Kidney (tissue), 22 donors: ENCODE measurements at regions of chr17 and their contacts with region 1.

Region 1: DNA sequence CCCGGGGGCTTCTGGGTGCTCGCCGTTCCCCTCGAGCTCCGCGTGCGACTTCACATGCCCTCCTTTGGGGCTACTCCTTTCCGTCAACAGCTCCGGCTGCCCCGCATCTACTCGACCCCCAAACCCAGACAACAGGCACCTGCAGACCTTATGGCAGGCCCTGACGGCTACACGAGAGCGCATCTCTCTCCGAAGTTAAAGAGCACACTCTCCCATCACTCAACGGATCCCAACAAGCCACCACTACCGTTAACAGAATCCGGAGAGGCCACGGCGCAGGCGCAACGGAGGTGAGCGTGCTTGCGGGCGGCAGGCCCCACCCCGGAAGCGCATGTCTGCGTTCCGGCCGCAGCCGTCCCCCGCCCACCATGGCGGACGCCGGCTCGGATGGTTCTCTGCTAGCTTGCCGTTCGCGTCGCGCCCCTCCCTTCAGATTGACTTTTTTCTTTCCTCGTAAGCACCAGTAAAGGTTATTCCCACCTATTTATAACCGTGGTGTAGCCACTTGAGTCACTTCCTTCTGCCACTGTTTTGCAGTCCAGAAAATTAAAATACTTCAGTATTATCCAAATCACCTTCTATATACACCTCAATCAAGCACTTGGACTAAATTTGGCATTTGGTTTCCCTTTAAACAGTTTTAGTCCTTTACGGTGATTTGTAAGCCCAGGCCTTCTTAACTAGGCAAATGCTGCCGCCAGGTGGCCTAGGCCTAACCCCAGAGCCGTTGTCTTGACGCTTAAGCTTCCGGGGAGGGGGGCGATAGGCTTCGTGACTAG is at the start of gene POLG2:
- DNase-seq: peak; percentile 93 to 97 (median 96)
- H3K4me3 ChIP-seq: peak within 1 kb of the TSS; percentile 85 to 97 (median 91)
- H3K27ac ChIP-seq: peak within 1 kb of the TSS; percentile 76 to 88
- H3K4me1 ChIP-seq: peaks cover 0 to 15% (median 7%) of the 10 kb centered on the region in 3 donors
- H3K27me3 ChIP-seq: no peaks in the 10 kb centered on the region
- CTCF ChIP-seq: peak; percentile 24
- total RNA-seq, gene POLG2: 18.4 TPM

Region 2: GRCh38 chr17:64420143-64420971 is 76.6 kb before region 1 on chr17:
- intact Hi-C with region 1: loop called (anchors 10 kb)
- DNase-seq: peak in 3 of 5 donors; percentile 20 to 92 (median 85)
- H3K4me3 ChIP-seq: no peak overlapping the region
- H3K27ac ChIP-seq: no peak overlapping the region
- H3K4me1 ChIP-seq: no peaks in the 10 kb centered on the region
- H3K27me3 ChIP-seq: no peaks in the 10 kb centered on the region
- CTCF ChIP-seq: peak; percentile 76